Ascending aorta (tissue), 2 donors: ENCODE measurements at regions of chr11 and their contacts with region 1.

Region 1: DNA sequence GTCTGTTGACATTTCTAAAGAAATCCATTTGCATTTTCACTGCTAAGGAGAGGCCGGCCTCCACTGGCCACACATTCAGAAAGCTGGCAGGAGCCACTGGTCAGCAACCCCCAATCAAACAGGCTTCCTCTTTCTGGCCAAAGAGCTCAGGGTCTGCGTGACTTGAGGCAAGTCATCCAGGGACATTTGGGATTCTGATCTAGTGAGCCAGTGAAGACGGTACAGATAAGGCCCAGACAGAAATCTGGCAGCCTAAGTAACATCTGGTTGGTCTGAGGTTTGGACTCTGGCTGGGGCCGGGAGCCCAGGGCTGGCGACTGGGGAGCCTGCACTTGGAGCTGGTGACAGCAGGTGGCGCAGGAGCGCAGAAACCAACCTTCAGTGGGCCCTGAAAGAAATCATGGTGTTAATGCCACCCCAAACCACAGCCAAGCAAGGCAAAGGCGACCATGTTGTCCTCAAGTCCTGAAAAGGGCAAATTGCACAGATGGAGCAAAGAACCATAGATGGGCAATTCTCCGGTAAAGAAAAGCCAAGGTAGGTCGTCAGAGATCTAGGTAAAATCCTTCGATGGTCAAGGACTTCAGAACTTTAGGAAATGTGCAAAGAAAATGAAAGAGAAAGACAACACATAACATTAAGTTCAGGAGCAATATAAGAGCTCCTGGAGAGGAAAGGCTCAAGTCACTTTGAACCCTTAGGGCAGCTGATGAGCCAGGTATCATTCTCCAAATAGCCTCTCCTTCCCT is 99.4 kb upstream of the BLID start:
- DNase-seq: peak in 1 of 2 donors; percentile 89
- H3K4me3 ChIP-seq: no peak overlapping the region
- H3K27ac ChIP-seq: peak overlapping the region; percentile 71 to 90
- H3K4me1 ChIP-seq: peaks cover 0 to 36% of the 10 kb centered on the region in 2 donors
- H3K27me3 ChIP-seq: no peaks in the 10 kb centered on the region
- CTCF ChIP-seq: peak; percentile 90 to 92 (median 92)

Region 2: DNA sequence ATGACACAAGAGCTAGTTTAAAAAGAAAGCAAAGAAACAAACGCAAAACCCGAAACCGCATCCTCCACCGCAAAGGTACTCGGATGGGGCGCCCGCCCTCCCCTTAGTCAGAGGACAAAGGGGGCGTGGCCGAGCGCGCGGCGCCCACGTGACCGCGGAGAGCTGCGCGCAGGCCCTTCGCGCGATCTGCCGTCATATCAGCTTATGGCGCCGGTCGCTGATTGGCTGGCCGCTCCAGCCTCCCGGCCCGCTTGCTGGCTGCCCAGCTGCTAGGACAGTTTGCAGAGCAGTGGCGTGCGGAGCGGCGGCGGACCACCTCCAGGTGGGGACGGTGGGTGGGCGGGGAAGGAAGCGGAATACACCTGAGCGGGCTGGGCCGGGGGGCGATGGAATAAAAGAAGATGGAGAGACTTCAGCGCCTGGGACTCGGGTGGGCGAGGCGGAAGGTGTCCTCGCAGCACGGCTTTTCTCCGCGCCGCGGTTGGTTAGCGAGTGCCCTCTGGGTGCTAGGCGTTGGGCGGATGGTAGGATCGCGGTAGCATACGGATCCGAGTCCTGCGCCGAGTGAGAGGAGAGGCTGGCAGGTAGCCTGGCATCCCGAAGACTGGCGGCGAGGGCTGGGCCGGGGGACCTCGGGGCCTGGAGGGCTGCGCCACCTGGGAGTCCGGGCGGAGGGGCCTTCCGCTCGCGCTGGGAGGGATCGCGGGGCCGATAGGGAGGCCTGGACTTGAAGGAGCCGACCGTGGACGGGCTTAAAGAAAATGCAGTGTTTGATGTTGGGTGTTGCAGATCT is 922.7 kb before region 1 on chr11 and contains the start of gene SC5D:
- intact Hi-C with region 1: loop called (anchors 10 kb)
- DNase-seq: peak; percentile 89 to 97
- H3K4me3 ChIP-seq: peak within 1 kb of the TSS; percentile 61 to 90
- H3K27ac ChIP-seq: peak within 1 kb of the TSS; percentile 76 to 91
- H3K4me1 ChIP-seq: peaks cover 0 to 7% of the 10 kb centered on the region in 2 donors
- H3K27me3 ChIP-seq: no peaks in the 10 kb centered on the region
- CTCF ChIP-seq: no peak
- total RNA-seq, gene SC5D: 18.8 TPM

Region 3: DNA sequence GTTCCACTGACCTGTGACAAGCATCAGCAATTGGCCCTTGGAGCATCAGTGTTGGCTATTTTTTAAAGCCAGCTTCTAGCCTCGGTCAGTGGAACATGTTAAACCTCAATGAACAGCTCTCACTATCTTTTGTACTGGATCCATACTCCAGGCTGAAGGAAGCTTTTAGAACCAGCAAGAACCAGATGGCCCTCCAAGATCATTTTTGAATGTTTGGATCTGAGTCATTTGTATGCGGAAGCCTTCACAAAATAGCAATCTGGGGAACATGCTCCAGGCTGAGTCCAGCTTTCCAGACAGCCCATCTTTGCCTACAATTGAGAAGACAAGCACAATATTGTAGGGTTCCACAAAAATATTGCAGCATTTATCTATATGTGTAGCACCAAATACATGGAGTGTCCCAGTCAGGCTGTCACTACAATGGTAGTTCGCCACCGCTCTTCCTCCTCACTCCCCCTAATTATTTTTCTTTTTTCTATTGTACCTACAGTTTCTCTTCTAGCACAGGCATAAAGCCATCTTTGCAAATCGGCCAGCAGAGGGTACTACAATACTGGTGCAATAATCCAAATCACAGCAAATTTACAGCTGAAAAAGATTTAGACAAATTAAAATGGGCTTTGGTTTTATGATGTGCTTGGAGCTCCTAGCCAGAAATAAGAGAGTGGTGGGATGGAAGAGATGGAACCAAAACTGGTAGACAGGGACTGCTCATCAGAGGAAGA is 78.0 kb after region 1 on chr11:
- intact Hi-C with region 1: loop called (anchors 5 kb)
- DNase-seq: no peak
- H3K4me3 ChIP-seq: no peak overlapping the region
- H3K27ac ChIP-seq: peak overlapping the region; percentile 20 to 30
- H3K4me1 ChIP-seq: no peaks in the 10 kb centered on the region
- H3K27me3 ChIP-seq: no peaks in the 10 kb centered on the region
- CTCF ChIP-seq: peak; percentile 11 to 39 (median 20)

Region 4: DNA sequence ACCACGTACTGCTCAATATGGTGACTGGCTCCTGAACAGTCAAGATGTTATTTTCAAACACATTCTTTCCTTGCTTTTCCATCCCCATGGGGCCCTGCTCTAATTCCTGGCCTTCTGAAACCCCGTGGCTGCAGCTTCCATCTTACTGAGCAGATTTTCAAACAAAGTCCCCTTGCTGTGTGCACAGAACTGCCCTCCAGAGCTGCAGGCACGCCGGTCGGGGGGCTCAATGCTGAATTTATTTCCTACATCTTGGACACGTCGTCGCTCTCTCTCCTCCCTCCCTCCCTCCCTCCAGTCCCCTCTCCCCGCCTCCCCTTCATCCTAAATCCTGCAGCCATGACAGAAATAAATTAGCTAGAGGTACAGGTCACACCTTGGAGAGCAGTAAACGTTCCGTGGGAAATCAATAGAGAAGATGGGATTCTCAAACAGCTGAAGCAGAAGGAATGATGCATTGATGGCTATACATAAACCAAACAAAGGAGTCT is 143.7 kb after region 1 on chr11:
- intact Hi-C with region 1: loop called (anchors 5 kb)
- DNase-seq: no peak
- H3K4me3 ChIP-seq: no peak overlapping the region
- H3K27ac ChIP-seq: peak overlapping the region; percentile 1 to 29
- H3K4me1 ChIP-seq: peaks cover 0 to 17% of the 10 kb centered on the region in 2 donors
- H3K27me3 ChIP-seq: no peaks in the 10 kb centered on the region
- CTCF ChIP-seq: no peak

Region 5: DNA sequence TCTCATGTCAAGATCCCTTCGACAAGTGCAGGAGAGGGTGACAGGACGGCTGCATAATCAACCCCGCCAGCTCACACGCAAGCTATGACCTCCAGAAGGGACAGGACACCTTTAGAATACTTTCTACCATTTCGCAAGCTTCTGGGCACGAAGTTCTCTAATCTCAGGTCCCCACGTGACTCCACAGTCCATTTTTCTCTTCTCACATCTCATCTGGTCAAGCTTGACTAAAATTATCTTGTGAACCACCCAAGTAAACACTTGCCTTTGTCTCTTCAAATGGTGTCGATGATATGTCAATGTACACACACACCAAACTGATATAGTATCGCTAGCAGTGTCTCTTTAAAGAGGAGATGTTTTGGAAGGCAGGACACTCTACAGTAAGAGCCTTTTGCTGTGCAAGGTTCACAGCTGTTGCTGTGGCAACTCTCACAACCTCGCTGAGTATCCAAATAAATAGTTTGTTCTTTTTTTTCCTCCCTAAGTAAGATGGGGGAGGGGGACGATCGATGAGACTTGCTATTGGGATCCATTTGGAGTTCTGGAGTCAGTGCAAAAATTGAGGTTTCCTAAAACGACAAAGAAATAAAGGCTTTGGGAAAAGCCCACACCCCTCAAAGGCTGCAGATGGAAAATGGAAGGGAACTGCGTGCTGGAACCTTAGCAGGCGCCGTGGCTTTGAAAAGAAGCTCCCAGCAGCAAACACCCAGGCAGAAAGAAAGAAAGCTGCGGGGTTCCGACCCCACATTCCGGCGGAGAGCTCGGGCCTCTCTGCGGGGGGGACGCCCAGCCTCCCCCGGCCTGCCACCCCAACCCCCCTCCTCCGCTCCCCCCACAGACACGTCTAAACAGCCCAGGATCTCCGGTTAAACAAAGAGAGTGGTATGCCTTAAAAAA is 224.7 kb after region 1 on chr11:
- intact Hi-C with region 1: loop called (anchors 5 kb)
- DNase-seq: no peak
- H3K4me3 ChIP-seq: peak overlapping the region; percentile 56 to 83
- H3K27ac ChIP-seq: peak overlapping the region; percentile 43 to 46
- H3K4me1 ChIP-seq: peaks cover 4 to 6% of the 10 kb centered on the region in 2 donors
- H3K27me3 ChIP-seq: no peaks in the 10 kb centered on the region
- CTCF ChIP-seq: no peak